Esophagus muscularis mucosa (tissue), 4 donors: ENCODE measurements at regions of chr3 and their contacts with region 1.

Region 1: GRCh38 chr3:71875461-71875947 is 90.6 kb upstream of the PROK2 start:
- DNase-seq: peak; percentile 92
- H3K4me3 ChIP-seq: no peak overlapping the region
- H3K27ac ChIP-seq: no peak overlapping the region
- H3K4me1 ChIP-seq: peaks cover 0 to 18% (median 11%) of the 10 kb centered on the region in 4 donors
- H3K27me3 ChIP-seq: peaks cover 0 to 3% (median 0%) of the 10 kb centered on the region in 4 donors
- CTCF ChIP-seq: peak; percentile 80 to 96 (median 88)
- EP300 ChIP-seq: no peak
- POLR2A ChIP-seq: no peak

Region 2: GRCh38 chr3:71955240-71956068 is 80.0 kb after region 1 on chr3:
- intact Hi-C with region 1: loop called (anchors 5 kb)
- DNase-seq: peak; percentile 93
- H3K4me3 ChIP-seq: no peak overlapping the region
- H3K27ac ChIP-seq: no peak overlapping the region
- H3K4me1 ChIP-seq: peaks cover 6 to 12% (median 10%) of the 10 kb centered on the region in 4 donors
- H3K27me3 ChIP-seq: no peaks in the 10 kb centered on the region
- CTCF ChIP-seq: peak; percentile 74 to 79 (median 74)
- EP300 ChIP-seq: no peak
- POLR2A ChIP-seq: no peak

Region 3: GRCh38 chr3:72265256-72266015 is 389.9 kb after region 1 on chr3:
- intact Hi-C with region 1: loop called (anchors 10 kb)
- DNase-seq: no peak
- H3K4me3 ChIP-seq: no peak overlapping the region
- H3K27ac ChIP-seq: no peak overlapping the region
- H3K4me1 ChIP-seq: peaks cover 16 to 32% (median 25%) of the 10 kb centered on the region in 4 donors
- H3K27me3 ChIP-seq: no peaks in the 10 kb centered on the region
- CTCF ChIP-seq: peak in 2 of 3 experiments; percentile 15 to 30
- EP300 ChIP-seq: no peak
- POLR2A ChIP-seq: no peak

Region 4: GRCh38 chr3:72738752-72739530 is 863.4 kb after region 1 on chr3:
- intact Hi-C with region 1: no loop called
- DNase-seq: no peak
- H3K4me3 ChIP-seq: peak overlapping the region; percentile 49 to 58 (median 54)
- H3K27ac ChIP-seq: no peak overlapping the region
- H3K4me1 ChIP-seq: peaks cover 0 to 19% (median 16%) of the 10 kb centered on the region in 4 donors
- H3K27me3 ChIP-seq: no peaks in the 10 kb centered on the region
- CTCF ChIP-seq: peak in 1 of 3 experiments; percentile 17
- EP300 ChIP-seq: no peak
- POLR2A ChIP-seq: no peak

Region 5: GRCh38 chr3:72818092-72818773 is 942.7 kb after region 1 on chr3:
- intact Hi-C with region 1: loop called (anchors 2 kb)
- DNase-seq: no peak
- H3K4me3 ChIP-seq: no peak overlapping the region
- H3K27ac ChIP-seq: no peak overlapping the region
- H3K4me1 ChIP-seq: peaks cover 23 to 37% (median 26%) of the 10 kb centered on the region in 4 donors
- H3K27me3 ChIP-seq: no peaks in the 10 kb centered on the region
- CTCF ChIP-seq: peak; percentile 44 to 56 (median 50)
- EP300 ChIP-seq: no peak
- POLR2A ChIP-seq: no peak